Activated naive CD4-positive, alpha-beta T cell treated with anti-CD3 and anti-CD28 coated beads for 36 hours (primary cell): ENCODE measurements at regions of chr18 and their contacts with region 1.

Region 1: GRCh38 chr18:35040988-35041814 is at the start of gene MAPRE2:
- DNase-seq: peak; percentile 99
- H3K4me3 Mint-ChIP-seq: peak within 1 kb of the TSS; percentile 96
- H3K27ac Mint-ChIP-seq: peak within 1 kb of the TSS; percentile 95
- H3K4me1 Mint-ChIP-seq: peaks cover 59% of the 10 kb centered on the region
- H3K27me3 Mint-ChIP-seq: no peaks in the 10 kb centered on the region
- total RNA-seq, gene MAPRE2: 62.5 to 66.2 TPM

Region 2: DNA sequence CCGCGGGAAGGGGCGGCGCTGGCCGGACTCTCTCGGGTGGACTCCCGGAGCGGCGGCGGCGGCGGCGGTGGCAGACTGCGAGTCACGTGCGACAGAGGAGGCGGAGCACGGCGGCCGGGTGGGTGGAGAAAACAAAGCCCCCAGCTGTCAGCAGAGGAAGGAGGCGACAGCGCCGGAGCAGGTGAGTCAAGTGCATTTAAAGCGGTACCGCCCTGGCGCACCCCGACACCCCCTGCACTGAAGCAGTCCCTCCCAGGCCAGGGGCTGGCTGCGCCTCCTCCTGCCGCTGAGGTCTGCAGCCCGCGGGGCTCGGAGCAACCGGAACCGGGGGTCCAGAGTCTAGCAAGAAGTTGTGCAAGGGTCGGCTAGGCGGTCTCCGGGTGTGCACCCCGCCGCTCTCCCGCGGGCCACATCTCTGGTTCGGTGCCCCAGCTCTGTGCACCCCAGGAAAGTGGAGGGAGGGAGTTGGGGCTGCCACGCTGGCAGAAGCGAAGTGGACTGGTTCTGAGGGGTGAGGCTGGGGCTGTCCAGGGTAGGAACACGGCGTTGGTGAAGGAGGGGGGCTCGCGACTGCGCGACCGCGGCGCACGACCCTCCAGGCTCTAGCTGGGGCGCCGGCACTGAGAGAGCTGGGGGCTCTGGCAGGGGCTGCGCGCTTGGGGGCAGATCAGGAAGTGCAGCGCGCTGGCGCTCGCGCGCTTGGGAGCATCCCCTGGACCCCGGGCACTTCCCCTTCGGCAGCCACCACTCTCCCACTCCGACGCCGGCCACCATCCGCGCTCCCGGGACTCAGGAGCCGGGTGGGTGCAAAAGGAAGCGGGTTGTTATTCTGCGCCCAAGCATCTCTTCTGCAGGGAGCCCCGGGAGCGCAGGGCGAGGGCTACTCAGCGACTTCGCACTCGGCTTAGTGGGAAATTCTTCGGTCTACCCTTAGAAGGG is 64.0 kb before region 1 on chr18:
- CTCF ChIA-PET with region 1: interaction called, 7 read pairs
- intact Hi-C with region 1: loop called (anchors 1 kb)
- DNase-seq: peak; percentile 79
- H3K4me3 Mint-ChIP-seq: peak overlapping the region; percentile 85
- H3K27ac Mint-ChIP-seq: no peak overlapping the region
- H3K4me1 Mint-ChIP-seq: peaks cover 23% of the 10 kb centered on the region
- H3K27me3 Mint-ChIP-seq: peaks cover 5% of the 10 kb centered on the region

Region 3: GRCh38 chr18:35071819-35072247 is 30.6 kb after region 1 on chr18:
- CTCF ChIA-PET with region 1: no interaction called
- intact Hi-C with region 1: no loop called
- DNase-seq: no peak
- H3K4me3 Mint-ChIP-seq: no peak overlapping the region
- H3K27ac Mint-ChIP-seq: no peak overlapping the region
- H3K4me1 Mint-ChIP-seq: peaks cover 52% of the 10 kb centered on the region
- H3K27me3 Mint-ChIP-seq: no peaks in the 10 kb centered on the region

Region 4: DNA sequence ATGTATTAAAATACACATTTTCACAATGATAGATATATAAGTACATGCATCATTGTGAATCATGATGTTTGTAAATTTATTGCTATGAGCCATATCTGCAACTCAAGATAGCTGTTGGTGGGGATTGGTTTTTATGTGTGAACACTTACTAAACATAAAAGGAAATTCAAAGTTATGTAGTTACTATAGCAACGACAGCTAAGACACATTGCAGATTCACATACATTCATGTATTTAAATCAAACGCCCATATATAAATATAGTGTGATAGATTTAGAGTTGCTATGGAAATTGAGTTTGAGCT is 65.6 kb after region 1 on chr18:
- CTCF ChIA-PET with region 1: interaction called, 7 read pairs
- intact Hi-C with region 1: loop called (anchors 1 kb)
- DNase-seq: no peak
- H3K4me3 Mint-ChIP-seq: no peak overlapping the region
- H3K27ac Mint-ChIP-seq: no peak overlapping the region
- H3K4me1 Mint-ChIP-seq: peaks cover 53% of the 10 kb centered on the region
- H3K27me3 Mint-ChIP-seq: no peaks in the 10 kb centered on the region

Region 5: GRCh38 chr18:35343936-35344735 is 302.9 kb after region 1 on chr18 and contains the start of gene ZNF24:
- CTCF ChIA-PET with region 1: no interaction called
- intact Hi-C with region 1: loop called (anchors 1 kb)
- DNase-seq: peak; percentile 94
- H3K4me3 Mint-ChIP-seq: peak within 1 kb of the TSS; percentile 92
- H3K27ac Mint-ChIP-seq: peak within 1 kb of the TSS; percentile 92
- H3K4me1 Mint-ChIP-seq: peaks cover 43% of the 10 kb centered on the region
- H3K27me3 Mint-ChIP-seq: no peaks in the 10 kb centered on the region
- total RNA-seq, gene ZNF24: 46.8 to 47.8 TPM

Region 6: GRCh38 chr18:35616664-35617423 is 575.6 kb after region 1 on chr18:
- CTCF ChIA-PET with region 1: no interaction called
- intact Hi-C with region 1: loop called (anchors 2 kb)
- DNase-seq: peak; percentile 86
- H3K4me3 Mint-ChIP-seq: no peak overlapping the region
- H3K27ac Mint-ChIP-seq: no peak overlapping the region
- H3K4me1 Mint-ChIP-seq: peaks cover 22% of the 10 kb centered on the region
- H3K27me3 Mint-ChIP-seq: no peaks in the 10 kb centered on the region

Region 7: DNA sequence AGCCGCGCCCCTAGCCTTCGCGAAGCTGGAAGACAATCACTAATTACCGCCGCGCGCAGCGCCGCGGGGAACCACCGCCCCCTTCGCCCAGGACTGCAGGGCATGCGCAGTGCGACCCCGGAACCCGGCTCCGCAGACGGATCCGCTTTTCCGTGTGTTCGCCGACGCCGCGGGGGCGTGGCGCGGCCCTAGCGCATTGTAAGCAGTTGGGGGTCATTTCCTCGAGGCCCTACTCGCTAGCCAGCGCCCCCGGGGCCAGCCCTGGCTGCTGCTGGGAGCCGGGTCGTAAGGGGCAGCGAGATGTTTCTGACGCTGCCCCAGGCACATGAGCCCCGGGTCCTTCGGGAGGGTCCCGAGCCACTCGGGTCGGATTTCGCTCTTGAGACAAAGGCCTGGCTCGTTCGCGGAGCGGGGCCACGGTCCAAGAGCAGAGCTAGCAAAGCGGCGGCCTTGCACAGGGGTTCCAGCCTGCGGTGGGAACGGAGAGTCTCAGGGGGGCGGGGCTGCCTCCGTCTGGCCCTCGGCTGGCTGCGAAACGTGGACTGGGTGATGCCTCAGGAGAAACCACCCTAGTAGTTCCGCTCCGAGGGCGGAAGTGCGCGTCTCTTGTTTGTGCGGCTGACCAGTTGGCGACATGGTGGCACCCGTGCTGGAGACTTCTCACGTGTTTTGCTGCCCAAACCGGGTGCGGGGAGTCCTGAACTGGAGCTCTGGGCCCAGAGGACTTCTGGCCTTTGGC is 1088.3 kb after region 1 on chr18 and contains the starts of genes ELP2 and SLC39A6:
- CTCF ChIA-PET with region 1: no interaction called
- intact Hi-C with region 1: loop called (anchors 10 kb)
- DNase-seq: peak; percentile 94
- H3K4me3 Mint-ChIP-seq: peak within 1 kb of the TSS; percentile 91
- H3K27ac Mint-ChIP-seq: peak within 1 kb of the TSS; percentile 92
- H3K4me1 Mint-ChIP-seq: peaks cover 61% of the 10 kb centered on the region
- H3K27me3 Mint-ChIP-seq: no peaks in the 10 kb centered on the region
- total RNA-seq, gene ELP2: 90.1 to 92.0 TPM
- total RNA-seq, gene SLC39A6: 15.4 to 15.7 TPM